Activated CD4-positive, alpha-beta memory T cell treated with anti-CD3 and anti-CD28 coated beads for 36 hours (primary cell): ENCODE measurements at regions of chr13 and their contacts with region 1.

Region 1: GRCh38 chr13:74287724-74288169 is 153.5 kb upstream of the KLF12 start:
- DNase-seq: peak; percentile 88
- H3K4me3 Mint-ChIP-seq: peak overlapping the region; percentile 59
- H3K27ac Mint-ChIP-seq: peak overlapping the region; percentile 30
- H3K4me1 Mint-ChIP-seq: peaks cover 66% of the 10 kb centered on the region
- H3K27me3 Mint-ChIP-seq: no peaks in the 10 kb centered on the region

Region 2: DNA sequence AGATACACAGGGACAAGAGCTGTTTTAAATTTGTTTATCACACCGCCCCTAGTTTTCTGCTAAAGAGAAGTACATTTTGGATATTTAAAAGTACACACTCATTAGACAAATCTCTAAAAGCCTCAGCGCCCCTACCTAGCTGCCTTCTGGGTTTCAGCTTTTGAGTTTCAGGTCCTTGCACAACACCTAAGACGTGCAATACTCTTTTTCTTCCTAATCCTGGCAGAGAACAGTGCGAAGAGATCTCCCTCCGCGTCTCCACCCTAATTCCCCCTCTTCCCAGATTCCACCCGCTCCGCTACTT is 1229.4 kb before region 1 on chr13:
- CTCF ChIA-PET with region 1: no interaction called
- POLR2A ChIA-PET with region 1: no interaction called
- intact Hi-C with region 1: no loop called
- DNase-seq: no peak
- H3K4me3 Mint-ChIP-seq: peak overlapping the region; percentile 75
- H3K27ac Mint-ChIP-seq: no peak overlapping the region
- H3K4me1 Mint-ChIP-seq: peaks cover 17% of the 10 kb centered on the region
- H3K27me3 Mint-ChIP-seq: peaks cover 16% of the 10 kb centered on the region

Region 3: DNA sequence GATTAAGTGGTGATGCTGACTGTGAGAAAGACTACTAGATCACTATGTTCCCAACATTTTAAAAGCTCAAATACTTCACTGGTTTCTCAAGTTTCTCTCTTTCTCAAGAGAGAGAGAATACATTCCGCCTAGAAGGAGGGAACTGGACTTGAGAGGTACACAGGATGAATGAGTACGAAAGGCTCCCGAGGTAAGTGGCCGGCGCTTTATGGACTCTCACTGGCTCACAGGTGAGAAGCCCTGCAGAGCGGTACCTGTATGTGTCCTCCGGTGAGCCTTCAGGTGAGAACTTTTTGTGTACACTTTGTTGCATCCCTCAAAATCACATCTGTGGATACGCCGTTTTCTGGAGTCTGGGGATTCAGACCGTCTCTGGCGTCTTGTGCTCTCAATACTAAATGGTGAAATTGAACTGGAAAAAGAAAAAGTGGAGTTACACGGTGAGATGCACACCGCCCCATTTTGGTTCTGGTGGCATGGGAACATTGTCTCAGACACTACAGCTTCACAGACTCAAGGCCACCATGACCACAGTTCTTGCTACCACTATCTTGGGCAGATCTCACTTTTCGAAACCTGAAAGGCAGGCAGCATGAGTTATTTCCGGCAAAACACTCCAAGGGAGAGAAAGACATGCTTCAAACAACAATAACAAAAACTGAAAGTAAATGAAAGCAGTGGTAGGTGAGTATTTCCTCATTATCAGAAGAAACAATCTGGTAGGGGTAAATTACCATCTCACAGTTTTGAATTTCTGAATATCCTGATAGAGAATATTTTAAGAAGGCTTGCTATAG is 572.4 kb before region 1 on chr13:
- CTCF ChIA-PET with region 1: no interaction called
- POLR2A ChIA-PET with region 1: no interaction called
- intact Hi-C with region 1: loop called (anchors 2 kb)
- DNase-seq: peak; percentile 77
- H3K4me3 Mint-ChIP-seq: peak overlapping the region; percentile 33
- H3K27ac Mint-ChIP-seq: peak overlapping the region; percentile 75
- H3K4me1 Mint-ChIP-seq: peaks cover 54% of the 10 kb centered on the region
- H3K27me3 Mint-ChIP-seq: no peaks in the 10 kb centered on the region

Region 4: DNA sequence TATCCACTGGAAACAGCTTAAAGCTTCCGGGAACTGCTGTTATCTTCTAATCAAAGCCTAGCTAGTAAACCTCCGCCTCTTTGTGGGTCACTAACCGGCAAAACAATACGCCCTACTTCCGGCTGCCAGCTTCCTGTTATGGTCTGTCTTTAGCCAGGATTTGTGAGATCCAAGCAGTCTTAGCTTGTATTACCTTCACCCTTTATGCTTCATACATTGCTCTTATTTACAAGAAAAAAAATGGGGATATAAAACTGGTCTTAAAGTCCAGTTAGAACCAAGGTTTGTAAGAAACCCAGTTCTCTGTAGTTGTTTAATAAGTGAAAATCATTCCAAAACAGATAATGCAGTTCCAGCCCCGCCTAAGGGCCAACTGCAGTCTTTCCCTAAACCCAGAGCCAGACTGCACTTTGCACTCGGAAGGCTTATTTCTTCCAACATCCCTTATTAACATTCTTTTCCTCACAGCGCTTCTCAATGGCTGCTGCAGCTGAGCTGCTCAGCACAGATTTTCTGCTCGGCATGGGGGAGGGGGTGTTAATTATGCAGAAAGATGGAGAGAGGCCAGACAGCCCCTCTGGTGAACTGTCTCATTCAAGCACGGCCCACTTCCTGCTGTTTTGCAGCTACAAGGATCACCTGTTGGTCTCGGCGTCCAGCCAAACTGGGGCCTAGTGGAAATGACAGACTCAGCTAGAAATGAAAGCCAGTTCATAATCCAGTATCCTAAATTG is 521.9 kb before region 1 on chr13:
- CTCF ChIA-PET with region 1: interaction called, 12 read pairs
- POLR2A ChIA-PET with region 1: interaction called, 3 read pairs
- intact Hi-C with region 1: loop called (anchors 2 kb)
- DNase-seq: peak; percentile 85
- H3K4me3 Mint-ChIP-seq: peak overlapping the region; percentile 69
- H3K27ac Mint-ChIP-seq: peak overlapping the region; percentile 92
- H3K4me1 Mint-ChIP-seq: peaks cover 66% of the 10 kb centered on the region
- H3K27me3 Mint-ChIP-seq: no peaks in the 10 kb centered on the region

Region 5: DNA sequence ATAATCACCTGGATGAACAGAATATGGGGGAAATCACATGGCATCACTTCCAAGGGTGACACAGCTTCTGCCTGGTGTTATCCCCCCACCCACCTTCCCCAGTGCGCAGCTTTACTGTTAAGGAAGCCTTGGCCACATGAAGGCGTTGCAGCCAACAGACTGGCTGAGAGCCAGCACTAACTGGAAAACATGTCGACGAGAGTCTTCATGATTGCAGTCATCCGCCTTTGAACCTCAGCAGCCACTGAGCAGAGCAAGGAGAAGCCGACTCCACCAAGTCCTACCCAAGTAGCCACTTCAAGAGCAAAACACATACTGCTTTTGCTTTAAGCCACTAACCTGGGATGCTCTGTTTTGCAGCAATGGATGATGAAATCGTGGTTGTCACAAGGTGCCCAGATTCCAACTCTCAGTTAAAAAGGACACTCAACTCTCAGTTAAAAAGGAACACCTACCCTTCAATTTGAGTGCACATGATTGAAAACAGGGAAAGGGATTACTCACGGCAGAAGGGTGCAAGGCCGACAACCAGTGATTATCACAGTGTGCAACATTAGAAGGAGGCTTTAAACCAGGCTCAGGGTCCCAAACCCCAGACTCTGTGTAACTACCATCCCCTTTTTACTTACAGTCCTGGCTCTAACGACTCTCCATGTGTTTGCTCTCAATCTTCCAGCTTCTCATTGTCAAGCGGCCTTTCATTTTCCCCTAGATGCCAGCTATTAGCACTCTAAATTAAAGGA is 302.6 kb before region 1 on chr13:
- CTCF ChIA-PET with region 1: interaction called, 6 read pairs
- POLR2A ChIA-PET with region 1: interaction called, 3 read pairs
- intact Hi-C with region 1: loop called (anchors 1 kb)
- DNase-seq: peak; percentile 89
- H3K4me3 Mint-ChIP-seq: peak overlapping the region; percentile 63
- H3K27ac Mint-ChIP-seq: peak overlapping the region; percentile 90
- H3K4me1 Mint-ChIP-seq: peaks cover 46% of the 10 kb centered on the region
- H3K27me3 Mint-ChIP-seq: no peaks in the 10 kb centered on the region

Region 6: DNA sequence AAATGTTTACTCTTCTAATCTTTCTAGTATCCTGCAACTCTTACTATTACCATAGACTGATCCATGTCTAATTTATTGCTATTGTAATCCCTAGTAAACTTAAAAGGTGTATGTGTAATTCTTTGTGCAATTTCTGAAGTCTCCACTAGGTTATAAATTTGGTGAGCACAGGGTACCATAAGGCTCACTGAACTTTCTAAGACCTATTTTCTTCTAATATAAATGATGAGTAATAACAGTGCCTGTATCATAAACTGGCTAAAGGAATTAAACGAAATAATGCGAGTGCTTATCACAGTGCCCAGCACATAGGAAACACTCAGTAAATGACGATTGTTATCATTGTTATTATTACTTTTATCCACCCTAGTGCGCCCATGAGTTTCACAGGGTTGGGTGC is 272.6 kb before region 1 on chr13:
- CTCF ChIA-PET with region 1: no interaction called
- POLR2A ChIA-PET with region 1: no interaction called
- intact Hi-C with region 1: no loop called
- DNase-seq: no peak
- H3K4me3 Mint-ChIP-seq: no peak overlapping the region
- H3K27ac Mint-ChIP-seq: no peak overlapping the region
- H3K4me1 Mint-ChIP-seq: peaks cover 37% of the 10 kb centered on the region
- H3K27me3 Mint-ChIP-seq: no peaks in the 10 kb centered on the region

Region 7: GRCh38 chr13:74191410-74191809 is 96.3 kb before region 1 on chr13:
- CTCF ChIA-PET with region 1: interaction called, 3 read pairs
- POLR2A ChIA-PET with region 1: no interaction called
- intact Hi-C with region 1: loop called (anchors 1 kb)
- DNase-seq: no peak
- H3K4me3 Mint-ChIP-seq: no peak overlapping the region
- H3K27ac Mint-ChIP-seq: no peak overlapping the region
- H3K4me1 Mint-ChIP-seq: peaks cover 20% of the 10 kb centered on the region
- H3K27me3 Mint-ChIP-seq: no peaks in the 10 kb centered on the region

Region 8: DNA sequence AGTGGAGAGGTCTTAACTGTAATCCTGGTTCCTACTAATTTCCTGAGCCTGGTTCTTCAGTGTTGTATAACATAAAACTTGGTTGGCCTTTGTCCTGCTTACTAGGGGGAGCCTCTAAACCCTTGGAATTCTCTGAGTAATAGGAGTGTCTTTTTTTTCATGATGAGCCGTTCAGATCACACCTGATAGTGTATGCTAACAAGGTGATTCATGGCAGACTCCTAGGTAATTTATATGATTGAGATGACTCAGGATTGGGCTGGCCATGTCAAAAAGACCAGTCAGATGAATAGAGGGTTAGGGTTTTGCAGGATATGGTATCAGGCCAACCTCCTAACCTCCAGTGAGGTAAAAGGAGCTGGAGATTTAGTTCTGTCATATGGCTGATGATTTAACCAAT is 17.7 kb before region 1 on chr13:
- CTCF ChIA-PET with region 1: interaction called, 9 read pairs
- POLR2A ChIA-PET with region 1: no interaction called
- intact Hi-C with region 1: loop called (anchors 2 kb)
- DNase-seq: no peak
- H3K4me3 Mint-ChIP-seq: no peak overlapping the region
- H3K27ac Mint-ChIP-seq: no peak overlapping the region
- H3K4me1 Mint-ChIP-seq: peaks cover 28% of the 10 kb centered on the region
- H3K27me3 Mint-ChIP-seq: no peaks in the 10 kb centered on the region

Region 9: GRCh38 chr13:74301258-74301935 is 13.7 kb after region 1 on chr13:
- CTCF ChIA-PET with region 1: no interaction called
- POLR2A ChIA-PET with region 1: no interaction called
- intact Hi-C with region 1: no loop called
- DNase-seq: no peak
- H3K4me3 Mint-ChIP-seq: no peak overlapping the region
- H3K27ac Mint-ChIP-seq: no peak overlapping the region
- H3K4me1 Mint-ChIP-seq: peaks cover 6% of the 10 kb centered on the region
- H3K27me3 Mint-ChIP-seq: no peaks in the 10 kb centered on the region